ENCODE measurements at regions of chr2 and their contacts with region 1.

Region 1: GRCh38 chr2:120312861-120313694 is 32.9 kb upstream of the INHBB start:
- DNase-seq: peak; percentile 90
- ATAC-seq: peak; percentile 83
- H3K4me3 Mint-ChIP-seq: peak overlapping the region; percentile 53
- H3K27ac Mint-ChIP-seq: peak overlapping the region; percentile 29
- H3K4me1 Mint-ChIP-seq: peaks cover 26% of the 10 kb centered on the region
- H3K27me3 Mint-ChIP-seq: no peaks in the 10 kb centered on the region

Region 2: DNA sequence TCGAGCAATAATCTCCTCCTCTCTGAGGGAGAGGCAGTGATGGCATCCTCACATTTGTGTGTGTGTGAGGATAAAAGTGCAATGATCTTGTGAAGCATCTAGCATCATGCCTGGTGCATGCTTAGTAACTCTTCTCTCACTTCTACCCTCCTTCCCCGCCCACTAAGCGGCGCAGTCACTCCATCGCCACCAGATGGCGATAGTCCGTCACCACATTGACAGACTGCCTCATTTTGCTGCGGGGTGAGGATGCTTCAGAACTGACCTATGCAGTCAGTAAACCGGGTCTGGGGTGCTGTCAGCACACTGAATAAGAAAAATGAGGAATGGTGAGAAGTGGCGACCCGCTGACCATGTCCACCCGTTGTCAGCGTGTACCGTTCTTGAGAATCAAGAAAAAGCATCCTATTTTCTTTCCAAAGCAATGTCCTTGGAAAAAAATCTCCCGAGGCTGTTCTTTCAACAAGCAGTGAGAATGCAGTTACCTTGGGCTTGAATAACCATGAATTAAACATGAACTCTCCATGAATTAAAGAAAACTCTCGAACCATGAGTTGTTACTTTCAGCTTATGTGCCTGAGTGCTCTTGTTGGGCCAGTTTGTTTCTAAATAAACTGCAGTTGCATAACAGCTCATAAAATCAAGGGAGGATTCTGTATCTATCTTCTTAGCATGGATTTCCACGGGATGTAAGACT is 671.4 kb before region 1 on chr2:
- CTCF ChIA-PET with region 1: no interaction called
- POLR2A ChIA-PET with region 1: no interaction called
- intact Hi-C with region 1: loop called in 1 of 2 experiments (anchors 2 kb)
- DNase-seq: peak; percentile 87
- ATAC-seq: peak; percentile 99
- H3K4me3 Mint-ChIP-seq: no peak overlapping the region
- H3K27ac Mint-ChIP-seq: no peak overlapping the region
- H3K4me1 Mint-ChIP-seq: peaks cover 2% of the 10 kb centered on the region
- H3K27me3 Mint-ChIP-seq: no peaks in the 10 kb centered on the region

Region 3: GRCh38 chr2:119826370-119826961 is 486.6 kb before region 1 on chr2:
- CTCF ChIA-PET with region 1: no interaction called
- POLR2A ChIA-PET with region 1: no interaction called
- intact Hi-C with region 1: loop called in 1 of 2 experiments (anchors 10 kb)
- DNase-seq: peak; percentile 57
- ATAC-seq: peak; percentile 54
- H3K4me3 Mint-ChIP-seq: no peak overlapping the region
- H3K27ac Mint-ChIP-seq: no peak overlapping the region
- H3K4me1 Mint-ChIP-seq: peaks cover 37% of the 10 kb centered on the region
- H3K27me3 Mint-ChIP-seq: no peaks in the 10 kb centered on the region

Region 4: DNA sequence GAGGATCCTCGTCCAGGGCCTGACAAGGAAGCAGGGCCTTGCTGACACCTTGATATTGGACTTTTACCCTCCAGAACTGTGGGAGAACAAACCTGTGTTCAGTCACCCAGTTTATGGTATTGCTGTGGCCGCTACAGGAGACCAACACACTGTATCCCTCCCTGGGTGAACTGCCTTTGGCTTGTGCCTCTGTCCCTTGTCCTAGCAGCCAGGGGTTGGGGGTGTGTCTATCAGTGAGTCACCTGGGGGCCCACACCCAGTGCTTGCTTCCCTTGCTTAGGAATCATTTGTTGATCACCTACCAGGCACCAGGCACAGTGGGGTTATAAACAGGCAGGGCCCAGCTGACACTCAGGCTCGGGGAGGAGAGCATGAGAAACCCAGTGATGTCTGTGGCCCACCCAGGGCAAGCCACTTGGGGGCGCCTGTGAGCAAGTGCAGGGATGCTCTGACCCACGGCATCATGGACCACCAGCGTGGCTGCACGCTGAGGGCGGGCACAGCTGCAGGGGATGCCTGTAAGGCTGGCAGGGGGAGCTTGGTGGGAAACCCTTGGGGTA is 107.0 kb before region 1 on chr2:
- CTCF ChIA-PET with region 1: interaction called, 6 read pairs
- POLR2A ChIA-PET with region 1: no interaction called
- intact Hi-C with region 1: loop called (anchors 1 kb)
- DNase-seq: peak; percentile 75
- ATAC-seq: peak; percentile 80
- H3K4me3 Mint-ChIP-seq: no peak overlapping the region
- H3K27ac Mint-ChIP-seq: no peak overlapping the region
- H3K4me1 Mint-ChIP-seq: peaks cover 4% of the 10 kb centered on the region
- H3K27me3 Mint-ChIP-seq: no peaks in the 10 kb centered on the region

Region 5: GRCh38 chr2:120231974-120232635 is 81.0 kb before region 1 on chr2:
- CTCF ChIA-PET with region 1: interaction called, 9 read pairs
- POLR2A ChIA-PET with region 1: no interaction called
- intact Hi-C with region 1: loop called (anchors 1 to 5 kb)
- DNase-seq: peak; percentile 83
- ATAC-seq: peak; percentile 88
- H3K4me3 Mint-ChIP-seq: peak overlapping the region; percentile 80
- H3K27ac Mint-ChIP-seq: peak overlapping the region; percentile 95
- H3K4me1 Mint-ChIP-seq: peaks cover 52% of the 10 kb centered on the region
- H3K27me3 Mint-ChIP-seq: no peaks in the 10 kb centered on the region

Region 6: DNA sequence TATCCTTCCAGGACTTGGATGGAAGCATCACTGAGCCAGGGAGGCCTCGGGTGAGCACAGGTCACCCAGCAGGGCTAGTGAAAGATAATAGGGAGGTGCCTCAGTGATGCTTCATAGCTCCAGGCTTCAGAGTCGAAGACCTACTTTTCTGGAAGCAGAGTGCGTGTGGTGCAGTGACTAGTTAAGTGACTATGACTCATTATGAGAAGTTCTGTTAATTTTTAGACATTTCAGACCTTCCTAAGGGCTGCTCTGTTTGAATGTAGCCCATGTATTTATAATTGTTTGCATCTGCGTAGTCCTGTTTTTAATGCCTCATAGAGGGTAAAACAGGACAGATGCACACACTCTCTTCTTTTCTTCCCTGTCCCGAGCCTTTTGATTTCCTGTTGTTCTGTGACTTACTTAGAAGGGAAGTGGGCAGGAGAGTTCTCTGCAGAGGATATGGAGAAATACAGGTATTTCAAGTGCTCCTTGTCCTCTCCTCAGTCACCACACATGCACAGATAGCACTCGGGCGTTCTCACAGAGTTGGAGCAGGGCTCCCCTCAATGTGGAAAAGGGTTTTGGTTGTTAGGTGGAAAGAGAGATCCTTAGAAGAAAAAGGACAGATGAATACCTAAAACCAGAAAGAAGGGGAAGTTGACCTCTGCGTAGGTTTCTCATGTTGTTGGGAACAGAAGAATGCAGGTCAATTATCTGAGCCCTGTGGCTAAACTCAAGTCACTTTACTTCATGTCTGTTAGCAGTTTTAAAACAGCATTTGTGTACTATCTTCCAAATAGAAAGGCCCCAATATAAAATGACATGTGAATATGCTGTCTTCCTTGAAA is 25.7 kb before region 1 on chr2:
- CTCF ChIA-PET with region 1: interaction called, 10 read pairs
- POLR2A ChIA-PET with region 1: no interaction called
- intact Hi-C with region 1: no loop called
- DNase-seq: peak; percentile 63
- ATAC-seq: peak; percentile 97
- H3K4me3 Mint-ChIP-seq: no peak overlapping the region
- H3K27ac Mint-ChIP-seq: peak overlapping the region; percentile 79
- H3K4me1 Mint-ChIP-seq: peaks cover 29% of the 10 kb centered on the region
- H3K27me3 Mint-ChIP-seq: no peaks in the 10 kb centered on the region